ENCODE measurements at regions of chr11 and their contacts with region 1.

Region 1: GRCh38 chr11:118956094-118956846 is at the start of gene UPK2:
- DNase-seq: peak; percentile 72
- ATAC-seq: peak; percentile 99
- H3K4me3 ChIP-seq: no peak within 1 kb of the TSS
- H3K27ac ChIP-seq: no peak within 1 kb of the TSS
- H3K4me1 ChIP-seq: no peaks in the 10 kb centered on the region
- H3K27me3 ChIP-seq: no peaks in the 10 kb centered on the region
- CTCF ChIP-seq: peak; percentile 96
- total RNA-seq, gene UPK2: 0.92 TPM

Region 2: GRCh38 chr11:118703563-118704106 is 252.6 kb before region 1 on chr11:
- CTCF ChIA-PET with region 1: no interaction called
- POLR2A ChIA-PET with region 1: interaction called, 12 read pairs
- in situ Hi-C with region 1: no loop called
- intact Hi-C with region 1: no loop called
- DNase-seq: no peak
- ATAC-seq: no peak
- H3K4me3 ChIP-seq: no peak overlapping the region
- H3K27ac ChIP-seq: no peak overlapping the region
- H3K4me1 ChIP-seq: no peaks in the 10 kb centered on the region
- H3K27me3 ChIP-seq: no peaks in the 10 kb centered on the region
- CTCF ChIP-seq: no peak

Measured in Panc1 (cell line).